MCF 10A (cell line): ENCODE measurements at regions of chr2 and their contacts with region 1.

Region 1: GRCh38 chr2:168336864-168337263 is 89.5 kb upstream of the STK39 start:
- DNase-seq: peak; percentile 86
- H3K4me3 Mint-ChIP-seq: no peak overlapping the region
- H3K27ac Mint-ChIP-seq: no peak overlapping the region
- H3K4me1 Mint-ChIP-seq: no peaks in the 10 kb centered on the region
- H3K27me3 Mint-ChIP-seq: no peaks in the 10 kb centered on the region
- CTCF ChIP-seq: peak; percentile 44

Region 2: DNA sequence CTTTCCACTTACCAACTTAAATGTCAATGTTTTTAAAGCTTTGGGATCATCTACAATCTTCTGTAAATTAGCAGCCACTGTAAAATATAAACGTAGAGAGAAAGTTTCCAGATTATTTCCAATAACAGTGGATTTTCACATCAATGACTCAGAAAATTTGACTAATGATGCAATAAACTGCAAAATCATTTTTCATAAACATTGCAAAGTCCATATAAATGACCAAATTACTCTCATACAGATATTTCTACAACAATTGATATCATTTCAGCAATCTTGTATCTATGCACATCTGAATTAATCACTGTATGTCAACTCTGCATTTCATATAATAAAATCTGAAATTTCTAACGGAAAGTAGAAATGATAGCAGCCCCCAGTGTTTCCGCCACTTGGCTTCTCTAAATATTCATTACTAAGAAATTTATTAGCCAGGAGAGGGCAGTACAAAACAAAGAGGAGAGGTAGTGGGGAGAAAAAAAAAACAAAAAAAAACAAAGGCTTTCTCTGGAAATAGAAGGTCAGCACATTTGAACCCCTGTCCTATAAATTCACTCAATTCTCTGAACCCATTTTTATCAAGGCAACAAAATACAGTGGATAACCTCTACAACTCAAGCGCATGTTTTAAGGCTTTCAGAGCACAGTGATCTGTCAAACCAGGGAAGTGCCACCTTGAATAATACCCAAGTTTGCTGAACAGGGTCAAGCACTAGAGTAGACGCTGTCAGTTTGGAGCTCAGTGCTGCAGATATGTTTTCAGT is 372.0 kb before region 1 on chr2:
- CTCF ChIA-PET with region 1: no interaction called
- POLR2A ChIA-PET with region 1: no interaction called
- intact Hi-C with region 1: loop called (anchors 10 kb)
- DNase-seq: peak; percentile 13
- H3K4me3 Mint-ChIP-seq: no peak overlapping the region
- H3K27ac Mint-ChIP-seq: no peak overlapping the region
- H3K4me1 Mint-ChIP-seq: no peaks in the 10 kb centered on the region
- H3K27me3 Mint-ChIP-seq: no peaks in the 10 kb centered on the region
- CTCF ChIP-seq: peak; percentile 24

Region 3: DNA sequence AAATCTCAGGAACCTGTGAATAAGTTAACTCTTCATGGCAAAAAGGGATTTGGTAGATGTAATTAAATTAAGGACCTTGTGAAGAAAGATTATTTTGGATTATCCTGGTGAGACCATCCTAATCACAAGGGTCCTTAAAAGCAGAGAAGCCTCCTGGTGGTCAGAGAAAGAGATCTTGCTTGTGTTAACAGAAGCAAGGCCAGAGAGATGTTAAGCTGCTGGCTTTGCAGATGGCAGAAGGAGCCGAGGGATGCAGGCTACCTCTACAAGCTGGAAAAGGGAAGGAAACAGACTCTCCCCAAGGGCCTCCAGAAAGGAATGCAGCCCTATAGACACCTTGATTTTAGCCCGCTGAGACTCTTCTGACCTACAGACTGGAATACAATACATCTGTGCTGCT is 286.5 kb before region 1 on chr2:
- CTCF ChIA-PET with region 1: no interaction called
- POLR2A ChIA-PET with region 1: no interaction called
- intact Hi-C with region 1: no loop called
- DNase-seq: no peak
- H3K4me3 Mint-ChIP-seq: no peak overlapping the region
- H3K27ac Mint-ChIP-seq: no peak overlapping the region
- H3K4me1 Mint-ChIP-seq: no peaks in the 10 kb centered on the region
- H3K27me3 Mint-ChIP-seq: no peaks in the 10 kb centered on the region
- CTCF ChIP-seq: no peak

Region 4: DNA sequence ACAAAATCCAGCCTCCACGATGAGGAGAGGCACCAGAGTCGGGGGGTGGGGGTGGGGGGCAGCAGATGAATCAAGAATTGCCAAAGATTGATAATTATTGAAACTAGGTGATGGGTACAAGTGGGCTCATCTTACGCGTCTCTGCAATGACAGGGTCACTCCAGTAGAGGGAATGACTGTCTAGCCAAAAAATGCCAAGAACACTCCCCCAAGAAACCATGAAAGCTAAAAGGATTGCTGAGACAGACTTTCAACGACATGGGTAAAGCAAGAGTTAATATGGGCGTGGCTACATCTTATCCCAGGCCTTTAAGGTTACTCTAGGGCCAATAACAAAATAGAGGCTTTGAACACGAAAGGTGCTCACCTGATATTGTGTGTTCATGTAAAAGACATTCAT is 176.0 kb before region 1 on chr2:
- CTCF ChIA-PET with region 1: interaction called, 13 read pairs
- POLR2A ChIA-PET with region 1: no interaction called
- intact Hi-C with region 1: loop called (anchors 2 kb)
- DNase-seq: peak; percentile 35
- H3K4me3 Mint-ChIP-seq: no peak overlapping the region
- H3K27ac Mint-ChIP-seq: no peak overlapping the region
- H3K4me1 Mint-ChIP-seq: peaks cover 7% of the 10 kb centered on the region
- H3K27me3 Mint-ChIP-seq: no peaks in the 10 kb centered on the region
- CTCF ChIP-seq: peak; percentile 32

Region 5: GRCh38 chr2:168323529-168324021 is 13.3 kb before region 1 on chr2:
- CTCF ChIA-PET with region 1: interaction called, 58 read pairs
- POLR2A ChIA-PET with region 1: no interaction called
- intact Hi-C with region 1: no loop called
- DNase-seq: no peak
- H3K4me3 Mint-ChIP-seq: no peak overlapping the region
- H3K27ac Mint-ChIP-seq: no peak overlapping the region
- H3K4me1 Mint-ChIP-seq: peaks cover 7% of the 10 kb centered on the region
- H3K27me3 Mint-ChIP-seq: no peaks in the 10 kb centered on the region
- CTCF ChIP-seq: no peak

Region 6: DNA sequence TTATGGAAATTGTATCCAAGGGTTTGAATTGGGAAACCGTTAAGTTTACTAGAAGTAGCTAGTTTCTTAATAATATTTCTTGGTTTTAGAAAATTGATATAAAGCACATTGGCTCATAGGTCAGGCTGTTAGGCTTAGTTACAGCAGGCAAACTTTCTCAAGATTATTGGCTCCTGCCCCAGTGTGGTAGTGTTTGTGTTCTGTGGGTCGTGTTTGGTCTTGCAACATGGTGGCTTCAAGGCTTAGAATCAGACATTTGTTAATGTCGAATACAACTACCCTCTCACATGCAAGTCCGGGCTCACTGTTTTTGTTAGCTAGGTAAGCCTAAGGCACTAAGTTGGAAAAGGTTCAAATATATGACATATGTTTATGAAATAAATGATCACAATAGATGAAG is 138.8 kb after region 1 on chr2:
- CTCF ChIA-PET with region 1: interaction called, 10 read pairs
- POLR2A ChIA-PET with region 1: no interaction called
- intact Hi-C with region 1: no loop called
- DNase-seq: peak; percentile 82
- H3K4me3 Mint-ChIP-seq: peak overlapping the region; percentile 39
- H3K27ac Mint-ChIP-seq: peak overlapping the region; percentile 40
- H3K4me1 Mint-ChIP-seq: peaks cover 24% of the 10 kb centered on the region
- H3K27me3 Mint-ChIP-seq: no peaks in the 10 kb centered on the region
- CTCF ChIP-seq: no peak